Lower lobe of right lung (tissue), 2 donors: ENCODE measurements at regions of chr17 and their contacts with region 1.

Region 1: DNA sequence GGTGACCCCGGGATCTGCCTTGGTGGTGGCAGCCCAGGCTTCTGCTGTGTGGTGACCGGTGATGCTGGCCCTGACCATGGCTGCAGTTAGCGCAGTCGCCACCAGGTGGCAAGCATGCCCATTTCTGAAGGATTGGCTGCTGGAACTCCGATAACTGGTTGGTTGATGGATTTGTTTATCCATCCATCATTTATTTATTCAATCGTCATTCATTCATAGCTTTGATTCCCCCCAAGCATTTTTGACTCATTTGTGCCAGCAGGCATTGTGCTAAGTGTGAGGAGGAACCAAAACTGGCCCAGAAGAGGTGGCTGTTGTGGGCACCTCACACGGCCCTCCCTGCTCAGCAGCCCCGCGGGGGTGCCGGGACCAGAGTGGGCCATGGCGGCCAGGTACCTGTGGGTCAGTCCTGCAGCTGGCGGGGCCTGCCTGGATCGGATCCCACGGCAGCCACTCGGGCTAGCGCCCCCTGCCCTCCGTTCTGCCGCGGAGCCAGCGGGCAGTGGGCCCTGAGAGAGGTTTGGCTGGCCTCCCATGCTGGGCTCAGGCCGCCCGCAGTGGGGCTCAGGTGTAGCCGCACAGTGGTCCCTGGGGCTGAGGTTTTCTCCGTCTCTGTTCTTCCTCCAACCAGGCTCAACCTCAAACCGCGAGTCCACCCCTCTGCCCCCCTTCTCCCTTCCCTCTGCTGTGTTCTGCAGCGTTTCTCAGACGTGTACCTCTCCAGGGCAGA is 28.8 kb upstream of the ITGA3 start:
- DNase-seq: peak; percentile 85
- ATAC-seq: peak; percentile 89
- H3K4me3 ChIP-seq: peak overlapping the region; percentile 50
- H3K27ac ChIP-seq: peak overlapping the region; percentile 61
- H3K4me1 ChIP-seq: peaks cover 27% of the 10 kb centered on the region
- H3K27me3 ChIP-seq: no peaks in the 10 kb centered on the region
- CTCF ChIP-seq: peak; percentile 98

Region 2: GRCh38 chr17:50074227-50074626 is 47.2 kb after region 1 on chr17:
- intact Hi-C with region 1: no loop called
- DNase-seq: no peak
- ATAC-seq: no peak
- H3K4me3 ChIP-seq: no peak overlapping the region
- H3K27ac ChIP-seq: no peak overlapping the region
- H3K4me1 ChIP-seq: no peaks in the 10 kb centered on the region
- H3K27me3 ChIP-seq: no peaks in the 10 kb centered on the region
- CTCF ChIP-seq: no peak

Region 3: DNA sequence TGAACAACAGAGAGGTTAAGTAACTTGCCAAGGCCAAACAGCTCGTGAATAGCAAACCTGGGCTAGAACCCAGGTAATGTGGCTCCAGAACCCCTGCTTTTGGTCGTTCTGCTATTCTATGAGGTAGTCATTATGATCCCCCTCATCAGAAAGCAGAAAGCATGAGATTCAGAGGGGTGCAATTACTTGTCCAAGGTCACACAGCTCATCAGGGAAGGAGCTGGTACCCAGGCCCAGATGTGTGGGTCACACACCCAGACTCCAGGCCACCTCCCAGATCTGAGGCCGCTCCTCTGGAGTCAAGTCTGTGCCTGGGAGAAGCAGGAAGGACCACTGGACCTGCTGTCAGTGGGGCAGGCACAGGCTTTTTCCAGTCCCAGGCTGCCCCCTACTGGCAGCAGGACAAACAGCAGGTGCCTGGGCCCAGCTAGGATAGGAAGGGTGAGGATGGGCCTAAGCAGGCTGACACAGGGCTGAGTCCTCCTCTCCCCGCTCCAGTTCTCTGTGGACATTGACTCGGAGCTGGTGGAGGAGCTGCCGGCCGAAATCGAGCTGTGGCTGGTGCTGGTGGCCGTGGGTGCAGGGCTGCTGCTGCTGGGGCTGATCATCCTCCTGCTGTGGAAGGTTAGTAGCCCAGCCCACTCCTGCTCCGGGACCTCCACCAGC is 60.3 kb after region 1 on chr17:
- intact Hi-C with region 1: loop called (anchors 10 kb)
- DNase-seq: peak; percentile 80
- ATAC-seq: peak; percentile 81 to 87
- H3K4me3 ChIP-seq: no peak overlapping the region
- H3K27ac ChIP-seq: no peak overlapping the region
- H3K4me1 ChIP-seq: no peaks in the 10 kb centered on the region
- H3K27me3 ChIP-seq: no peaks in the 10 kb centered on the region
- CTCF ChIP-seq: peak; percentile 99